ENCODE measurements at regions of chr4 and their contacts with region 1.

Region 1: DNA sequence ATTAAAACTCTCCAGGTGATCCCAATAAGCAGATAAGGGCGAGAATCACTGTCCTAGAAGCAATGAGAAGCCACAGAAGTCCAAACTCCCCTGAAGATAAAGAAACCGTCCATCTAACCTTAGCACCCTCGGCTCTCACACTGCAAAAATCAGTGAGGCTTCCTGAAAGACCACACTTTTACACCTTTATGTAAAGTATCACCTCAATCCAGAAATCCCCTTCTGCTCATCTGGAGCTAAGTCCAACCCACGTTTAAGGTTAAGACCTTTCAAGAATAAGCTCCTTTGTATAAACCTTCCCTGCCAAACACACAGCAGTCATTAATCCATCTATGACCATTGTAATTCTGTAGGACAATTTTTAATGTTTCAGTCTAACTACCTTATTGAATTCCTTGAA is 41.7 kb downstream of the LIN54 start:
- DNase-seq: no peak
- ATAC-seq: no peak
- H3K4me3 Mint-ChIP-seq: no peak overlapping the region
- H3K27ac Mint-ChIP-seq: no peak overlapping the region
- H3K4me1 Mint-ChIP-seq: no peaks in the 10 kb centered on the region
- H3K27me3 Mint-ChIP-seq: no peaks in the 10 kb centered on the region

Region 2: GRCh38 chr4:82989575-82990429 is 20.8 kb after region 1 on chr4:
- CTCF ChIA-PET with region 1: no interaction called
- POLR2A ChIA-PET with region 1: interaction called, 10 read pairs
- intact Hi-C with region 1: no loop called
- DNase-seq: peak; percentile 28
- ATAC-seq: peak; percentile 80
- H3K4me3 Mint-ChIP-seq: peak overlapping the region; percentile 3
- H3K27ac Mint-ChIP-seq: peak overlapping the region; percentile 6
- H3K4me1 Mint-ChIP-seq: peaks cover 16% of the 10 kb centered on the region
- H3K27me3 Mint-ChIP-seq: no peaks in the 10 kb centered on the region

Measured in activated CD4-positive, alpha-beta T cell treated with anti-CD3 and anti-CD28 coated beads for 36 hours (primary cell).